ENCODE measurements at regions of chr7 and their contacts with region 1.

Region 1: GRCh38 chr7:107743567-107744344 is at the start of gene CBLL1:
- DNase-seq: peak; percentile 96 to 98 (median 98)
- H3K4me3 ChIP-seq: peak within 1 kb of the TSS; percentile 78 to 99 (median 94)
- H3K27ac ChIP-seq: peak within 1 kb of the TSS; percentile 99
- H3K4me1 ChIP-seq: peaks cover 22 to 38% (median 30%) of the 10 kb centered on the region in 4 experiments
- H3K27me3 ChIP-seq: no peaks in the 10 kb centered on the region

Region 2: GRCh38 chr7:107462740-107463444 is 280.9 kb before region 1 on chr7:
- CTCF ChIA-PET with region 1: interaction called, 14 read pairs
- POLR2A ChIA-PET with region 1: no interaction called
- DNase-seq: peak; percentile 59 to 81 (median 74)
- H3K4me3 ChIP-seq: no peak overlapping the region
- H3K27ac ChIP-seq: no peak overlapping the region
- H3K4me1 ChIP-seq: peaks cover 0 to 8% (median 0%) of the 10 kb centered on the region in 4 experiments
- H3K27me3 ChIP-seq: no peaks in the 10 kb centered on the region

Region 3: DNA sequence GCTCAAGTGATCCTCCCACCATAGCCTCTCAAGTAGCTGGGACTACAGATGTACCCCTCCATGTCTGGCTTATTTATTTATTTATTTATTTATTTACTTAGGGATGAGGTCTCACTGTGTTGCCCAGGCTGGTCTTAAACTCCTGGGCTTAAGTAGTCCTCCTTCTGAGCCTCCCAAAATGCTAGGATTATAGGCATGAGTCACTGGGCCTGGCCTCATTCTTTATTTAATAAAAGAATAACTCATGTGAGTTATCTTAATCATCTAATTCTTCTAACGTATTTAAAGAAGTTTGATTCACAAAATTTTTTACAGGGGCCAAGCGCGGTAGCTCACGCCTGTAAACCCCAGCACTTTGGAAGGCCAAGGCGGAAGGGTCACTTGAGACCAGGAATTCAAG is 91.1 kb before region 1 on chr7:
- CTCF ChIA-PET with region 1: no interaction called
- POLR2A ChIA-PET with region 1: no interaction called
- DNase-seq: no peak
- H3K4me3 ChIP-seq: no peak overlapping the region
- H3K27ac ChIP-seq: no peak overlapping the region
- H3K4me1 ChIP-seq: no peaks in the 10 kb centered on the region
- H3K27me3 ChIP-seq: no peaks in the 10 kb centered on the region

Region 4: GRCh38 chr7:107725151-107725740 is 18.5 kb before region 1 on chr7:
- CTCF ChIA-PET with region 1: interaction called, 16 read pairs
- POLR2A ChIA-PET with region 1: no interaction called
- DNase-seq: peak; percentile 59 to 73 (median 68)
- H3K4me3 ChIP-seq: no peak overlapping the region
- H3K27ac ChIP-seq: no peak overlapping the region
- H3K4me1 ChIP-seq: no peaks in the 10 kb centered on the region
- H3K27me3 ChIP-seq: peaks cover 0 to 2% (median 0%) of the 10 kb centered on the region in 5 experiments

Region 5: GRCh38 chr7:107754642-107755041 is 10.9 kb after region 1 on chr7:
- CTCF ChIA-PET with region 1: interaction called, 10 read pairs
- POLR2A ChIA-PET with region 1: interaction called, 5 read pairs
- DNase-seq: no peak
- H3K4me3 ChIP-seq: no peak overlapping the region
- H3K27ac ChIP-seq: no peak overlapping the region
- H3K4me1 ChIP-seq: no peaks in the 10 kb centered on the region
- H3K27me3 ChIP-seq: no peaks in the 10 kb centered on the region

Region 6: DNA sequence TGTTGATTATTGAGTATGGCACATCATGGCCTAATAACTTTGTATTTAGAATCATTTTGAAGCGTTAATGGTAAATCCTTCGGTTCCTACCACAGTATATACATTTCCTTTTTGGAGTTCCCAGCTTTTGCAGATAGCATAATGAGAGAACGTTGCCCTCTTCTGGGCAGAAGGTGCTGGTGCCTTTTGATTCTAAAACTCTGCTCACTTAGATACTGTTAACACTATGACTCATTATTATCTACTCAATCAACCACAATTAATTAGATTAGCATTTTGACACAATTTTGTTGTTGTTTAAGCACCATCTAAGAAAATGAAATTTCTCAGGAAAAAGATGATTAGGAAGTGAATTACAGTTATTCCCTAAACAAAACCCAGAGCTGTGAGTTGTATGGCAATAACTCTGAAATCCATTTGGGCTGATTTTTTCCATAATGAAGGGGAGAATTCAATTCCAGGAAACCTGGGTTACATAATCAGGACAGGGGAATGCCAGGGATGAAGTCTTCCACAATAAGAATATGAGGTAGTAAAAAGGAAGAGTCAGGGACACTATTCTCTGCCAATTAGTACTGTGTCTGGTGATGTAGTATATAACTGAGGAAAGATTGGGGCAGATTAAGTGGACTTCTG is 135.8 kb after region 1 on chr7:
- CTCF ChIA-PET with region 1: interaction called, 148 read pairs
- POLR2A ChIA-PET with region 1: interaction called, 14 read pairs
- DNase-seq: peak; percentile 78 to 79 (median 78)
- H3K4me3 ChIP-seq: no peak overlapping the region
- H3K27ac ChIP-seq: no peak overlapping the region
- H3K4me1 ChIP-seq: peaks cover 4 to 28% (median 18%) of the 10 kb centered on the region in 4 experiments
- H3K27me3 ChIP-seq: no peaks in the 10 kb centered on the region

Region 7: DNA sequence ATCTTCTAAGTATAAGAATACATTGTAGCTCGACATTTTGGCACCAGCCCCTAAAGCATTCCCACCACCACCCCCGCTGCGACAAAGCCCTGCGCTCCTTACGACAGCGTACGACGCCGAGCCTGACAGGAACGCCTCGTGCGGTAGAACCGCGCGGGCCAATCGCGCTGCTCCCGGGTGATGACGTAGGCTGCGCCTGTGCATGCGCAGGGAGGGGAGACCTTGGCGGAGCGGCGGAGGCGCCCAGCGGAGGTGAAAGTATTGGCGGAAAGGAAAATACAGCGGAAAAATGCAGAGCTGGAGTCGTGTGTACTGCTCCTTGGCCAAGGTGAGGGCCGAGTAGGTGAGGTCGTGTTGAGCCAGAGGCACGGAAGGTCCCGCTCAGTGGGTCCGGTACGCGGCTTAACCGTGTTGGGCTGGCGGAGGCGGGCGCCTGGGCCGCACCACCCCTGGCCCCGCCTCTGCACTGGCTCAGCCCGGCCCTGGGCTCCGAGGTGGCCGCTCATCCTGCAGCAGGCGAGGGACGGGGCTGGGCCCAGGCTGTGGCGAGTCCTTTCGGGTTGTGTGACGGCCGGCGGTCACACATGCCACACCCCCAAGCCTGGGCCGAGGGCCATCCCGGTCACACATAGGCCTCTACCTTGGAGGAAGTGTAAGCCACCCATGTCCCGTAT is 147.3 kb after region 1 on chr7 and contains the start of gene DLD:
- CTCF ChIA-PET with region 1: interaction called, 12 read pairs
- POLR2A ChIA-PET with region 1: interaction called, 5 read pairs
- DNase-seq: peak; percentile 93 to 97 (median 97)
- H3K4me3 ChIP-seq: peak within 1 kb of the TSS; percentile 37 to 96 (median 85)
- H3K27ac ChIP-seq: peak within 1 kb of the TSS; percentile 96 to 98
- H3K4me1 ChIP-seq: peaks cover 13 to 32% (median 19%) of the 10 kb centered on the region in 4 experiments
- H3K27me3 ChIP-seq: no peaks in the 10 kb centered on the region

Region 8: DNA sequence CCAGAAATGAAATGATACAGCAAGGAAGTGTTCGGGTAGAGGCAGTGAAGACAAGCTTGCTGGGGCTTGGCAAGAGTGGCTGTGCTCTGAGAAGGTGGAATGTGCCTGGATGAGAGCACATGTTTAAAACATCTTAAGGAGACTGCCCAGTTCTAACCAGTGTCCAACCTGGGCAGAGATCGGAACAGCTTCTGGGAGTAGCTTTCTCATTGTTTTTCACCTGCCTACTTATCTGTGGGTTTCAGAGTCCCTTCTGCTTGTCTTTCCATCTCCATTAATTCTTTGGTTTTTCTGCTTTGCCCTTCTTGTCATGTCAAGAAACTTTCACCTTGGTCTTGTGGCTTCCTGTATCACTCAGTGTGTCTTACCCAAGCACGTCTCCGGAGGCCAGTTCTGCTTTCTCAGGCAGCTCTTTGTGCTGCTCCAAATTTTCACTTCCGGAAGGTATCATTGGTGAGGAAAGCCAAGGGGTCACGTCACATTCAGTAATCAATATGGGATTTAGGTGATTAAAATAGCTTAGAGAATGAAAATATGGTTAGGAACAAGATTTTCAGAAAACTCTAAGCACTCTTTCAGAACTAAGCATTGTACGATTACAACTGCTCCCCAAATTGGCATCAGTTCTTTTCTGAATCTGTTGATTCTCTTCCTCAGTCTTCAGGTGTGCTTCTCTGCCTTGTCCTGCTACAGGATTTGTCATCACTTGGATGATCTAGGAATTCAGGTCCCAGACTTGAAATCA is 391.9 kb after region 1 on chr7:
- CTCF ChIA-PET with region 1: no interaction called
- POLR2A ChIA-PET with region 1: no interaction called
- DNase-seq: peak; percentile 54 to 93 (median 89)
- H3K4me3 ChIP-seq: peak overlapping the region in 2 of 7 experiments; percentile 14 to 29
- H3K27ac ChIP-seq: peak overlapping the region; percentile 41 to 54
- H3K4me1 ChIP-seq: peaks cover 16 to 52% (median 20%) of the 10 kb centered on the region in 4 experiments
- H3K27me3 ChIP-seq: no peaks in the 10 kb centered on the region

Region 9: DNA sequence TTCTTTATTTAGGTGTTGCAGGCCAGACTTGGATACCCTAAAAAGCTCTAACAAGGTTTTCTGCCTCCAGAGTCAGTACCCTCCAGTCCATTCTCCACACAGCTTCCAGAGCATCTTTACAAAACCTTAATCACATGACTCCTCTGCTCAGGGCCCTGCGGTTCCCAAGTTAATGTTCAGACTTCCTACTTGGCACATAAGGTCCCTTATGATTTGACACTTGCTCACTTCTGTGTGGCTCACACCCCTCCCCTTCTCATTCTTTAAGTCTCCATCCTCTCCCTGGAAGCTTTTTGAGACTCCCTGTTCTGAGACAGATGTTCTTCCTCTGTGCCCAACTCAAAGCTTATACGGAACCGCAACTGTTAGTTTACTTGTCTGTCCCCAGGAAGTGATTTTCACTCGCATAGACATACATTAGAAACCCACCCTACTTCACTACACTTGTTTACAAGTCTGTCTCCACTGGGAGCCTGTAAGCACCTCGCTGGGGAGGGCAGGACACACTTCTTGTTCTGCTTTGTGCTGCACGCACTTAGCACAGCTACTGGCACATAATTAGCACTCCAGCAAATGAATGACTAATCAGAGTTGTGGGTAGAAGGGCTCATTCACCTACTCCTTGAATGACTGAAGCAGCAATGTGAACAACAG is 540.7 kb after region 1 on chr7:
- CTCF ChIA-PET with region 1: no interaction called
- POLR2A ChIA-PET with region 1: no interaction called
- DNase-seq: peak; percentile 14 to 67 (median 46)
- H3K4me3 ChIP-seq: no peak overlapping the region
- H3K27ac ChIP-seq: no peak overlapping the region
- H3K4me1 ChIP-seq: peaks cover 0 to 6% (median under 1%) of the 10 kb centered on the region in 4 experiments
- H3K27me3 ChIP-seq: peaks cover 0 to 19% (median 9%) of the 10 kb centered on the region in 5 experiments